PC-3 (cell line): ENCODE measurements at regions of chr7 and their contacts with region 1.

Region 1: GRCh38 chr7:123635551-123636359 is 19.9 kb upstream of the LMOD2 start:
- DNase-seq: peak; percentile 55
- ATAC-seq: peak; percentile 60
- H3K4me3 ChIP-seq: no peak overlapping the region
- H3K27ac ChIP-seq: no peak overlapping the region
- H3K4me1 ChIP-seq: peaks cover 15% of the 10 kb centered on the region
- H3K27me3 ChIP-seq: no peaks in the 10 kb centered on the region
- CTCF ChIP-seq: peak; percentile 76

Region 2: GRCh38 chr7:123580406-123581161 is 55.2 kb before region 1 on chr7:
- CTCF ChIA-PET with region 1: interaction called, 3 read pairs
- POLR2A ChIA-PET with region 1: no interaction called
- intact Hi-C with region 1: loop called (anchors 5 kb)
- DNase-seq: peak; percentile 70
- ATAC-seq: peak; percentile 94
- H3K4me3 ChIP-seq: no peak overlapping the region
- H3K27ac ChIP-seq: no peak overlapping the region
- H3K4me1 ChIP-seq: no peaks in the 10 kb centered on the region
- H3K27me3 ChIP-seq: peaks cover 25% of the 10 kb centered on the region
- CTCF ChIP-seq: peak; percentile 87

Region 3: GRCh38 chr7:123665157-123665556 is 29.4 kb after region 1 on chr7:
- CTCF ChIA-PET with region 1: no interaction called
- POLR2A ChIA-PET with region 1: no interaction called
- intact Hi-C with region 1: loop called (anchors 1 kb)
- DNase-seq: peak; percentile 56
- ATAC-seq: peak; percentile 81
- H3K4me3 ChIP-seq: no peak overlapping the region
- H3K27ac ChIP-seq: no peak overlapping the region
- H3K4me1 ChIP-seq: peaks cover 9% of the 10 kb centered on the region
- H3K27me3 ChIP-seq: no peaks in the 10 kb centered on the region
- CTCF ChIP-seq: no peak

Region 4: GRCh38 chr7:123682690-123683089 is 46.9 kb after region 1 on chr7:
- CTCF ChIA-PET with region 1: interaction called, 3 read pairs
- POLR2A ChIA-PET with region 1: no interaction called
- intact Hi-C with region 1: loop called (anchors 1 kb)
- DNase-seq: peak; percentile 78
- ATAC-seq: peak; percentile 72
- H3K4me3 ChIP-seq: no peak overlapping the region
- H3K27ac ChIP-seq: no peak overlapping the region
- H3K4me1 ChIP-seq: no peaks in the 10 kb centered on the region
- H3K27me3 ChIP-seq: no peaks in the 10 kb centered on the region
- CTCF ChIP-seq: peak; percentile 65

Region 5: DNA sequence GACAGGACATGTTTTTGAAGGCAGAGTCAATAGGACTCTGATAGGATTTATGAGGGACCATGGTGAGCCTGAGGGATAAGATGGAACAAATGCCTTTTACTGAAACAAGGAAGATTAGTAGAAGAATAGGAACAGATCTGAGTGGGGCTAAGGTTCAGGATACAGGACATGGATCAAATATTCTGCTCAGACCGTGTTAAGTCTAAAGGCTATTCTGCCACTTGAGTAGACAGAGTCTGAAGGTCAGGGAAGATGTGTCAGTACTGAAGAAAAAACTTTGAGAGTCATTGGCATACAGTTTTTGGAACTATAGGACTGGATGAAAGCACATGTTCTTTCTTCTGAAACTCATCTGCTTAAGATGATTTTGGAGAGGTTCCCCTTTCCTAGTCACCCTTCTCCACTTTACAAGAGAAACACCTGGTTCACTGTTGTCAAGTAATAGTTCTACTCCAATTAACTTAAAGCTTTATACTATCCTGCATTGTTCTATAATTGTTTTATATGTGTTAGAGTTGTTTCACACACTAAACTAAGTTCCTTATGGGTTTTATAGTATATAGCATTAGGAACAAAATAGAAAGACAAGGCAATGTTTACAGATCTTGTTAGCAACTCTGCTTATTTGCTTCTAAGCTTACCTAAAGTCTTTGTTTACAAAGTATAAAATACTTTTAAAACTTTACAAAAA is 69.6 kb after region 1 on chr7:
- CTCF ChIA-PET with region 1: interaction called, 6 read pairs
- POLR2A ChIA-PET with region 1: no interaction called
- intact Hi-C with region 1: loop called (anchors 1 kb)
- DNase-seq: no peak
- ATAC-seq: no peak
- H3K4me3 ChIP-seq: no peak overlapping the region
- H3K27ac ChIP-seq: no peak overlapping the region
- H3K4me1 ChIP-seq: no peaks in the 10 kb centered on the region
- H3K27me3 ChIP-seq: no peaks in the 10 kb centered on the region
- CTCF ChIP-seq: no peak

Region 6: GRCh38 chr7:123865517-123866117 is 229.9 kb after region 1 on chr7:
- CTCF ChIA-PET with region 1: no interaction called
- POLR2A ChIA-PET with region 1: no interaction called
- intact Hi-C with region 1: loop called (anchors 1 kb)
- DNase-seq: peak; percentile 78
- ATAC-seq: peak; percentile 95
- H3K4me3 ChIP-seq: no peak overlapping the region
- H3K27ac ChIP-seq: no peak overlapping the region
- H3K4me1 ChIP-seq: peaks cover 7% of the 10 kb centered on the region
- H3K27me3 ChIP-seq: no peaks in the 10 kb centered on the region
- CTCF ChIP-seq: peak; percentile 82

Region 7: GRCh38 chr7:123871998-123872867 is 236.5 kb after region 1 on chr7:
- CTCF ChIA-PET with region 1: interaction called, 4 read pairs
- POLR2A ChIA-PET with region 1: no interaction called
- intact Hi-C with region 1: loop called (anchors 1 kb)
- DNase-seq: peak; percentile 76
- ATAC-seq: peak; percentile 98
- H3K4me3 ChIP-seq: no peak overlapping the region
- H3K27ac ChIP-seq: no peak overlapping the region
- H3K4me1 ChIP-seq: peaks cover 12% of the 10 kb centered on the region; the same call in 1 of the 2 replicates
- H3K27me3 ChIP-seq: no peaks in the 10 kb centered on the region
- CTCF ChIP-seq: peak; percentile 86